B cell (primary cell): ENCODE measurements at regions of chr15 and their contacts with region 1.

Region 1: DNA sequence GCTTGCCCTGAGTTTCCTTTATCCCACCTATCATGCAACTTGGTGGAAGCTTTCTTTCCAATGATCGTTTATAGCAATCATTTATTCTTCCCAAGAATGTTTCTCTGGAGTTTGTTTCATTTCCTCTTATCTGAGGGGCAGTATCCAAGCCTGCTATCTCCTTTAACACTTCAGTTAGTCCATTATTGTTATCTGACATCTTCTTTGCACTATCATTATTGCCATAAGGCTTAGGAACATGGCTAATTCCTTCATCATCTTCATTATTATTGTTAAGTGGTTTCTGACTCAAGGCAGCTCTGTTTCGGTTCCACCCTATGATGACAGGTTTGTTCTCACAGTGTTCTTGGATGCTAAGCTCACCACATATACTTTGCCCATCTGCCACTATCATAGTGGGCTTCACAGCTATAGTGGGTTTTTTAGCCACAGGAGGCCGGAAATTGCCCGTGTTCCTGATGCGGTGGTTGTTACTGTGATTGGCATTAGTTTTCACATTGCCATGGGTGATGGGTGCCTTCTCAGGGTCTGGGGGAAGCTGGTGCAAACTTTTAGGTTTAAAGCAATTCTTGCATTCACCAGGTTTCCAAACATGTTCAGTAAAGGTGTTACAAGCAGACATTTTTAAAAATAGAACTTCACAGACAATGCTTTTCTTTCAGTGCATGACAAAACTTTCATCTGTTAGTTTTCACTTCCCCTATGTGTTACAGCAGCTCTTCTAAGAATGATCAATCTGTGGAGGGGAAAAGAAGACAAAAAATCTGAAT is 110.6 kb upstream of the TSPAN3 start:
- DNase-seq: peak; percentile 69
- ATAC-seq: peak; percentile 70
- H3K4me3 ChIP-seq: peak overlapping the region in 4 of 5 experiments; percentile 35 to 50 (median 41)
- H3K4me3 Mint-ChIP-seq: peak overlapping the region; percentile 75
- H3K27ac ChIP-seq: peak overlapping the region; percentile 76 to 84
- H3K27ac Mint-ChIP-seq: peak overlapping the region; percentile 88
- H3K4me1 ChIP-seq: peaks cover 74 to 81% of the 10 kb centered on the region in 2 donors
- H3K4me1 Mint-ChIP-seq: peaks cover 72% of the 10 kb centered on the region
- H3K27me3 ChIP-seq: no peaks in the 10 kb centered on the region
- H3K27me3 Mint-ChIP-seq: no peaks in the 10 kb centered on the region
- CTCF ChIP-seq: no peak

Region 2: DNA sequence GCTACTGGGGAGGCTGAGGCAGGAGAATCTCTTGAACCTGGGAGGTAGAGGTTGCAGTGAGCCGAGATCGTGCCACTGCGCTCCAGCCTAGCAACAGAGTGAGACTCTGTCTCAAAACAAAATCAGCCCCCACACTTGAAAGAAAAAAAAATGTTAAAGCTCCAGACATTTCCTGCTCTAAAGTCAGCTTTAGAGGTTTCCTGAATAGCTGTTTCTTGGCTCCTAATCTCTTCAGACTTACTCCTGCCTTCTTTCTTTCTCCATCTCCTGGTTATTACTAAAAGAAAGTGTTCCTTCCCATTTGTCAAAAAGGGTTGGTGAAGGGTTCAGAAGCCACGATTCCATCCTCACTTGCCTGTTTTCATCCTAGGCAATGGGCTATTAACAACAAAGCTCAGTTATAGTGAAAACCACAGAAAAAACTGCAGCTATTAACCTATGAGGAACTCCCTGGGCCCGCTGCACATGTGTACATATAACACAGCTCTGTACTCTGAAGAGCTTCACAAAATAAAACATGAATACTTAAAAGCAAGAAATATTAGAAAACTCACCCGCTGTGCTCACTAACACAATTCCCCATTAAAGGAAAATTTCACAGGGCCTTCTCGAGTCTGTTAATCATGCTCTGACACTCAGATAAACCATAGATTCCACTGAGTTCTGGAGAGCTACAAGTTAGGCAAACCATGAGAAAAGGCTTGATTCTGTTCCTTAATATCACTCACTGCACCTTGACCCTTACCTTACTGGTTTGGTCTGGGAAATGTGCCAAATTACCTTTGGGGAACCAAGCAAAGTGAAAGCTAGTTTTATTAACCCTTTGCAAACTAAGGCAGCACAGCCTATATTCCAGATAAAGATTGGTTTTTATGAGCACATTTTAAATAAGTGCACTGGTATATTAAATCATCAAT is 20.7 kb before region 1 on chr15:
- CTCF ChIA-PET with region 1: interaction called, 6 read pairs
- POLR2A ChIA-PET with region 1: no interaction called
- intact Hi-C with region 1: loop called (anchors 2 kb)
- DNase-seq: peak; percentile 42
- ATAC-seq: no peak
- H3K4me3 ChIP-seq: peak overlapping the region in 2 of 5 experiments; percentile 7 to 32
- H3K4me3 Mint-ChIP-seq: peak overlapping the region; percentile 69
- H3K27ac ChIP-seq: peak overlapping the region; percentile 61 to 86
- H3K27ac Mint-ChIP-seq: peak overlapping the region; percentile 87
- H3K4me1 ChIP-seq: peaks cover 40 to 48% of the 10 kb centered on the region in 2 donors
- H3K4me1 Mint-ChIP-seq: peaks cover 48% of the 10 kb centered on the region
- H3K27me3 ChIP-seq: no peaks in the 10 kb centered on the region
- H3K27me3 Mint-ChIP-seq: no peaks in the 10 kb centered on the region
- CTCF ChIP-seq: no peak

Region 3: GRCh38 chr15:77295446-77295845 is 114.0 kb after region 1 on chr15:
- CTCF ChIA-PET with region 1: no interaction called
- POLR2A ChIA-PET with region 1: no interaction called
- intact Hi-C with region 1: no loop called
- DNase-seq: no peak
- ATAC-seq: no peak
- H3K4me3 ChIP-seq: no peak overlapping the region
- H3K4me3 Mint-ChIP-seq: no peak overlapping the region
- H3K27ac ChIP-seq: no peak overlapping the region
- H3K27ac Mint-ChIP-seq: no peak overlapping the region
- H3K4me1 ChIP-seq: no peaks in the 10 kb centered on the region
- H3K4me1 Mint-ChIP-seq: no peaks in the 10 kb centered on the region
- H3K27me3 ChIP-seq: no peaks in the 10 kb centered on the region
- H3K27me3 Mint-ChIP-seq: no peaks in the 10 kb centered on the region
- CTCF ChIP-seq: no peak

Region 4: DNA sequence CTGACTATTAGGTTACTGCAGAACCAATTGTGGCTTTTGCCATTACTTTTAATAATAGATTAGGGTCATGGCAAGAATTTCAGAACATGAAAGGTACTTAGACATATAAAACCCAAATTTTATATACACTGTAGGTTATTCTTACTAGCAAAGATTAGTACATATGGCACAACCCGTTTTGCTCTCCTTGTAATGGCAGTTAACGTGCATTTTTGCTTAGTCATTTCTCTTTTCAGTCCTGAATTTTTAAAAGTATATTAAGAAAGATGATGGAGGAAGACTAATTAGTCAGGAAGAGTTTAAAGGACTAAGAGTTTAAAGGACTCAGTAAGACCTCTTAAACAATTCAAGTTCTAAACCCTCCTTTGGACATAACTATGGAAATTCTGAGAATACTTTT is 124.5 kb after region 1 on chr15:
- CTCF ChIA-PET with region 1: no interaction called
- POLR2A ChIA-PET with region 1: no interaction called
- intact Hi-C with region 1: no loop called
- DNase-seq: no peak
- ATAC-seq: no peak
- H3K4me3 ChIP-seq: no peak overlapping the region
- H3K4me3 Mint-ChIP-seq: no peak overlapping the region
- H3K27ac ChIP-seq: no peak overlapping the region
- H3K27ac Mint-ChIP-seq: no peak overlapping the region
- H3K4me1 ChIP-seq: peaks cover 0 to 8% of the 10 kb centered on the region in 2 donors
- H3K4me1 Mint-ChIP-seq: peaks cover 20% of the 10 kb centered on the region
- H3K27me3 ChIP-seq: no peaks in the 10 kb centered on the region
- H3K27me3 Mint-ChIP-seq: no peaks in the 10 kb centered on the region
- CTCF ChIP-seq: no peak